Head of caudate nucleus (tissue), 42 donors: ENCODE measurements at regions of chr9 and their contacts with region 1.

Region 1: DNA sequence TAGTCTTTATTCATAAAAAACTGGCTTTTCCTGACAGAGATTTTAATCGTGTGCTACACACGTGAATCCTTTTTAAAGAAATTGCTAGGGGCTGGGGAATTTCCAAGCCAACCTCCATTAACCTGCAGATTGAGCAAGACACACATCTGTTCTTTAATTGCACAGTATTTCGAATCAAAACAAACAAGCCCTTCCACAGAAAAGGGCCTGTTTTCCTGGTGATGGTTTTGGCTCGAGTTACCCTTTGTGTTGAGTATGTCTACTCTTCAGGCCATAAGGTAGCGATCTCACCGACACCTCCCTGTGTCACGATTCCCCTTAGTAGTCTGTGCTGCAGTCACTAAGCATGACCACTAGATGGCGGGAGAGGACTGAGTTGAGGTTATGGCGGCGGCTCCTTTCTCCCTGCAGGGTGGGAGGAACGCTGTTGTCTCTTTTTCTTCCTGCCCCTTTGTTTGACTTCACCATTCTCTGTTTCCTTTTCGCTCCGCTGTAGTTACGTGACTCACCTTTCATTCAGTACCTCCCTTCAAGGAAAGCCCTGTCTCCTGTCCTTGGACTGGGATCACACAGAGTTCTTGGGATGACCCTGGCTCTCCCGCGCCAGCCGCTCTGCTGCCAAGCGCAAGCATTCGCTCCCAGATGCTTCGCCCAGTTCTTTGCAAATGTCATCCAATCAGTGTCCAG is 137.1 kb upstream of the SLC24A2 start:
- DNase-seq: peak; percentile 65 to 93 (median 84)

Region 2: GRCh38 chr9:19471737-19472648 is 454.0 kb before region 1 on chr9:
- intact Hi-C with region 1: loop called (anchors 5 kb)
- DNase-seq: peak; percentile 70 to 92 (median 83)

Region 3: DNA sequence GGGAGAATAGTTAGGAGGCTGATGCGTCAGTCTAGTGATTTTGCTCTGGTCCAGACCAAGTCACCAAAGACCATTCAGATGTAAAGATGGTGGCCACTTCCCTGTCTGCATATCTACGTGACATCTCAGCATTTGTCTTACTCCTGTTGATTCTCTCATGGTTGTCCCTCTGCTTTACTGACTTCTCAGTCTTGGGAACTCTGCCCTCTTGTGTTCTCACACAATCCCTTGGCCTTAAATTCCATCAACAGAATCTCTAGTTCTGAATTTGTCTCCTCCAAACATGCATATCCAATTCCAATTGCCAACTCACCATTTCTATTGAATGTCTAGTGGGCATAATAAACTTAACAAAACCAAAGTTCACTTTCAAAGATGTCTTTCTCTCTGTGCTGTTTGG is 284.9 kb before region 1 on chr9:
- intact Hi-C with region 1: loop called (anchors 10 kb)
- DNase-seq: peak in 6 of 42 donors; percentile 28 to 76 (median 47)

Region 4: GRCh38 chr9:20622330-20623020 is 696.5 kb after region 1 on chr9 and contains the start of gene MLLT3:
- intact Hi-C with region 1: loop called (anchors 10 kb)
- DNase-seq: peak; percentile 89 to 98 (median 97)

Region 5: GRCh38 chr9:20941174-20941690 is 1015.3 kb after region 1 on chr9:
- intact Hi-C with region 1: loop called (anchors 5 kb)
- DNase-seq: peak in 39 of 42 donors; percentile 7 to 84 (median 50)

Region 6: DNA sequence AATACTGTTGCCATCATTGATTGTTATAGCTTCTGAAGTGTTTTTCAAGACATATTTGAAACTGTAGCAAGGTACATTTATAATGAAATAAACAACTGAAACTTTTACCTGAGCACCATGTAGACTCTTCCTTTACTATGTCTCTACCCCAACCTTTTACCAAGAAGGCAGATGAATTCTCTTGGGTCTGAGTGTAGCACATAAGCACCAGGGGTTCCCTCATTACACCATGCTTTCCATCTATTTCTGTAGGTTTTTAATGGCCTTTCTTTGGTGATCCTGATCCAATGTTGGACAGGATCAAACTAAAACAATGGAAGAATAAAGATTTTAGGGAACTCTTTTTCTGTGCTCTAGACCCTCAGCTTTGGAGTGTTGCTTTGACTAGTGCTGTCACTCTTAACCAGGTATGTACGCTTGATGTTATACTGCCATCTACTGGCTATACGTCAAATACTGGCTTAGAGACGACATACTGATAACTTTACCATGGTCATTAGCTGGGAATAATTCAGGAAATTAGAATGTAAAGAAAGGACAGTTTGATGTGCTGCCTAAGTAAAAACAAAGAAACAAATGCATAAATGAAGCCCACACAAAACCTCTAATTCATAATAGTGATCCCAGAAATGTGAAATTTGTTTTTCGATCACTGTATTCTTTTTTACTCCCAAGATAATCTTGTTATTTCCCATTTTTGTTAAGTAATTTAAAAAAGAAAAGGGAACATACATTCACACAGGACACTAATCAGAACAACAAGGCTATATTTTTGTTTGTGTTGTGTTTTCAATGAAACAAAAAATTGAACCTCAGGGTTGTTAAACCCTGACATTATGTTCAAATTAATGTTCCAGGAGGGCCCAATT is 1185.0 kb after region 1 on chr9:
- intact Hi-C with region 1: loop called (anchors 10 kb)
- DNase-seq: peak in 11 of 42 donors; percentile 15 to 68 (median 36)